Posterior vena cava (tissue), 2 donors: ENCODE measurements at regions of chr16 and their contacts with region 1.

Region 1: DNA sequence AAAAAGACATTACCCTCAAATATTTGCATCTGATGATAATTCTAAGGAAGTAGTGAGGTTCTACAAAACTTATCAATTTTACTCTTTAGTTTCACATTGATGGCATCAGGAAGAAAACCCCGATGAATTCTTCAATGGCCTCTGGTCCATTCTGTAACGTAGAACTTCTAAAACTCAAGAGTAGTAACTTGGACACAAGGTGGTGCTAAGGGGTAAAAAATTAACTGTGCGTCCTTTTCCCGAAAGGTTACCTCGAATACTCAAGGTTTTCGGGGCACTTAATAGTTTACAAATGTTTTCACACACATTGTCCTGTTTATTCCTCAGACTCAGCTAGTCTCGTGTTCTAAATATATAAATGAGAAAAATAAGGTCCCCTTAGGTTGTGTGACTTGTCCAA is 517.3 kb upstream of the ZFHX3 start:
- DNase-seq: no peak

Region 2: GRCh38 chr16:73447850-73448249 is 117.4 kb before region 1 on chr16:
- intact Hi-C with region 1: no loop called
- DNase-seq: no peak

Region 3: DNA sequence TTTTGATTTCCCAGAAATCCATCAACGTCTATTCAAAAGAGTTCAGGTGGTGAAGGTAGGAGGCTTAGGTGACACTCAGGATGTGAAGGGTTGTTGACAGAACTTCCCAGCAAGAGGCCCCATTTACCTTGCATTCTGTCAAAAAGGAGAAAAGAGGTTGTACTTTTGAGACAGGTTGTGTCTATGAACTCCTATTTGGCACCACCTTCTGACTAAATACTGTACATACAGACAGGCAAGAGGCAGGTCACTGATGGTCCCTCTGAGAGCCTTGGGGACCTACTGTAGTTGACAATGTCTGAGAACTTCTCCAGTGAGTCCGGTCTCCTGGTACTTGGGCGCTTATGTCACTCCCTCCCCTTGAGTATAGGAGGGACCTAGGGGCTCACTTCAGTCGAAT is 38.1 kb before region 1 on chr16:
- intact Hi-C with region 1: no loop called
- DNase-seq: no peak

Region 4: DNA sequence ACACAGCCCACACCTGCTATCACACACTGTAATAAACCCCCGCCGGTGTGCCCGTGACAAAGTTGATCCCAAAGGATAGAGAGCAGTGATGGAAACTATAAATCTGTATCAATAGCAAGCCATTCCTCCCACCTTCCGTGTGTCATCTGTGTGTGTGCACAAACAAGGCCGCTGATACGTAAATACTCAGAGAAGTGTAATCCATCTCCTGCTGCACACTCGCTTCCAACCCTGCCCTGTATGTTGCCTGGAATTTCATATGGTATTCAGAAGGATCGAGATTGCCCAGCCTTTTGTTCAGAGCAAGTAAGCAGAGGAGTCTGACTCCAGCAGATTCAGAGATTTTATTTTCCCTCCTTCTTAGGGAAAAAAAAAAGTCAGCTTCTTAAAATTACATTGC is 63.7 kb after region 1 on chr16:
- intact Hi-C with region 1: no loop called
- DNase-seq: no peak

Region 5: DNA sequence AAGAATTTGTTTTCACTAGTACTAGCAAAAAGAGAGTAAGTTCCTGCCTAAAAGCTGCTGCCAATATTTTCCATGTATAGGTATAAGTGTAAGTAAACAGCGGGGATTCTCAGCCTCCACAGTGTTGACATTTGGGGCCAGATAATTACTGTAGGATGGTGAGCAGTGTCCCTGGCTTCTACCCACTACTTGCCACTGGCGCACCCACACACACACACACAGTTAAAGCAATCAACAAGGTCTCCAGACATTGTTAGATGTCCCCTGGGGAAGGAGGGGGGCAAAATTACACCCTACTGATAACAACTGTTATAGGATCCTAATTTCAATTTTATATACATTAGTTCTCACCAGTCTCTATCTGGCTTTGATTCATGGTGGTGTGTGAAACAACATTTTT is 314.4 kb after region 1 on chr16:
- intact Hi-C with region 1: no loop called
- DNase-seq: no peak

Region 6: DNA sequence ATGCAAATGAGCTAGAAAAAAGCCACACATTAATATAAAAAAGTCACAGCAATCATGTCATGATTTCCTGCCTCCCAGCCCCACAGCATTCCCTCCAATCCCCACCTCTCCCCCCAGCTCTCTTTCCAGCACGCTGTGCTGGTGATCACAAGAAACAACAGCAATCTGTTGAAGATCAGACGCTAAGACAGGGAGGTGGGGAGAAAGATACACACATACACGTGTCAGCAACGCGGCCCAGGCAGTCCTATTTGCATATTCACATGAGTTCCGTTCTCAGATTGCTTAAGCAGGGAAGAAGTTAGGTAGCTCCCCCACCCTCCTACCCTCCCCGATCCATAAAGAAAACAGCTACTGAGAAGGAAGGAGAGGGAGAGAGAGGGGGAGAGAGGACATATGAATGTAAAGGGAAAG is 325.9 kb after region 1 on chr16:
- intact Hi-C with region 1: loop called in 1 of 2 experiments (anchors 10 kb)
- DNase-seq: no peak